ENCODE measurements at regions of chr11 and their contacts with region 1.

Region 1: DNA sequence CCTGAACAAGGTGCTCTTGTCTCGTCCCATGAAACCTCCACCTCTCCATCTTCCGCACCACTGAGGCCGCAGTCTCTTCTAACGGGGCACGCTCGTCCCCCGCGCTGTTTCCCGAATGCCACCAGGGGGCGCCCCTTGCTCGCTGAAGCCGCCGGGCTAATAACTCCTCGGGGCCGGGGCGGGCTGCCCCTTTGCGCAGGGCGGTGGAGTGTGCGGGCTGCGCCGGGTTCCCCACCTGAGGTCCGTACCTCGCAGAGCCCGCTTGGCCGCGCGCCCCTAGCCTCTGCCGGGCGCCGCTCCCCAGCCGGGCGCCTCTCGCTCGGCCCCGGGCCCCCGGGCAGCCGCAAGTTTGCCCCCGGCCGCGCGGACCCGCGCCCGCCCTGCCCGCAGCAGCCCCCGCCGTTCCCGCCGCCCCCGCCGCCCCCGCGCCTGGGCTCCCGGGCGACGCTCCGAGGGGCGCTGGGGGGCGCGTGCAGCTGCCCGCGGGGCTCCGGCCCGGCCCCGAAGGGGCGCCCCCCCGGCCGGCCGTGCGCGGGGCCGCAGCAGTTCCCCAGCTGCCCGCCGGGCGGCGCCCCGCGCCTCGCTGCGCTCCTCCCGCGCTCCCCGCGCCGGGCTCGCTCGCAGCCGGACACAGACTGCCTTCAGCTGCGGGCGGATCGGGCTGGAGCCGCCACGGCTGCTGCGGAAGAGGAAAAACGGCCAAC is at the start of gene GRIK4:
- DNase-seq: peak; percentile 22
- ATAC-seq: peak; percentile 94
- H3K4me3 ChIP-seq: peak within 1 kb of the TSS; percentile 41 to 42
- H3K27ac ChIP-seq: no peak within 1 kb of the TSS
- H3K4me1 ChIP-seq: peaks cover 3% of the 10 kb centered on the region
- H3K27me3 ChIP-seq: peaks cover 3% of the 10 kb centered on the region
- CTCF ChIP-seq: peak; percentile 96
- total RNA-seq, gene GRIK4: 0.62 TPM

Region 2: DNA sequence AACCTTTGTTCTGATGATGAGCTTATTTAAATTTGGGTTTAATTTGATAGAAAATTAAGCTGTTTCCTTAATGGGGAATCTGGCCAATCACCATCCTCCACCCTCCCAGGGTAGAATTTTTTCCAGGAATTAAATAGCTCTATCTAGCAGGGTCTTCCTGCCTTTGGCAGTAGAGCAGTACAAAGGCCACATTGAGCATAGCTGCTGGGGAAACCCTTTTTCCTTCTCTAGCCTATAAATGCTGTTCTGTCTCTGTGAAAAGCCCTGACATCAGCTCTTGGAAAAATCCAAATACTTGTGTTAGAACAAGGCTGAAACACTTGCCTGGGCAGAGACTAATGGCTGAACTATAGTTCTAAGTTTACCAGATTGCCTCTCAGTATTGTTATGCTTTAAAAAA is 120.0 kb before region 1 on chr11:
- CTCF ChIA-PET with region 1: no interaction called
- POLR2A ChIA-PET with region 1: no interaction called
- in situ Hi-C with region 1: no loop called
- intact Hi-C with region 1: no loop called
- DNase-seq: no peak
- ATAC-seq: 0 out of 2 replicates have a peak, but pooled peaks have one; percentile 30
- H3K4me3 ChIP-seq: no peak overlapping the region
- H3K27ac ChIP-seq: peak overlapping the region; percentile 3
- H3K4me1 ChIP-seq: peaks cover 32% of the 10 kb centered on the region
- H3K27me3 ChIP-seq: no peaks in the 10 kb centered on the region
- CTCF ChIP-seq: no peak

Region 3: DNA sequence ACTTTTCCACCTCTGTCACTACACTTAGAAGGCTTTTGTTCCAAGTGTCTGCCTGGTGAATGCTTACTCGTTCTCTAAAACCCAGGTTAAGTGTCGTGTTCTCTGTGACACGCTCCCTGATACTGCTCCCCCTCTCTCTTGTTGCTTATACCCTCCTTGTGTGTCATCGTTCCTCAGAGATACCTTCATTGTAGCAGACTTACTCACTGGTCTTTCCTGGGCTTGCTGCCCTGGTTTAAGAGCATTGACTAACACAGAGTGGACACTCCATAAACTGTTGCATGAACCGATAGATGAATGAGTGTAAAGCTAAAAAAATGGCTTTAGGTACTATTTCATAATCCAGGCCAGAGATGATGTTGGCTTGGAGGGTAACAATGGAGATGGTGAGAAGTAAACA is 171.6 kb after region 1 on chr11:
- CTCF ChIA-PET with region 1: interaction called, 12 read pairs
- POLR2A ChIA-PET with region 1: no interaction called
- in situ Hi-C with region 1: no loop called
- intact Hi-C with region 1: loop called (anchors 1 kb)
- DNase-seq: no peak
- ATAC-seq: no peak
- H3K4me3 ChIP-seq: no peak overlapping the region
- H3K27ac ChIP-seq: no peak overlapping the region
- H3K4me1 ChIP-seq: no peaks in the 10 kb centered on the region
- H3K27me3 ChIP-seq: peaks cover 25% of the 10 kb centered on the region
- CTCF ChIP-seq: no peak

Region 4: GRCh38 chr11:120771551-120772060 is 260.3 kb after region 1 on chr11:
- CTCF ChIA-PET with region 1: no interaction called
- POLR2A ChIA-PET with region 1: no interaction called
- in situ Hi-C with region 1: no loop called
- intact Hi-C with region 1: no loop called
- DNase-seq: no peak
- ATAC-seq: no peak
- H3K4me3 ChIP-seq: no peak overlapping the region
- H3K27ac ChIP-seq: no peak overlapping the region
- H3K4me1 ChIP-seq: no peaks in the 10 kb centered on the region
- H3K27me3 ChIP-seq: no peaks in the 10 kb centered on the region; the same call in 1 of the 2 replicates
- CTCF ChIP-seq: no peak

Region 5: GRCh38 chr11:120952461-120953434 is 441.5 kb after region 1 on chr11:
- CTCF ChIA-PET with region 1: no interaction called
- POLR2A ChIA-PET with region 1: no interaction called
- in situ Hi-C with region 1: no loop called
- intact Hi-C with region 1: loop called (anchors 1 kb)
- DNase-seq: peak; percentile 51
- ATAC-seq: peak; percentile 90
- H3K4me3 ChIP-seq: peak overlapping the region in 1 of 2 experiments; percentile 10; a peak in 1 of 4 replicates
- H3K27ac ChIP-seq: no peak overlapping the region
- H3K4me1 ChIP-seq: no peaks in the 10 kb centered on the region
- H3K27me3 ChIP-seq: peaks cover 28% of the 10 kb centered on the region
- CTCF ChIP-seq: peak; percentile 95

Region 6: DNA sequence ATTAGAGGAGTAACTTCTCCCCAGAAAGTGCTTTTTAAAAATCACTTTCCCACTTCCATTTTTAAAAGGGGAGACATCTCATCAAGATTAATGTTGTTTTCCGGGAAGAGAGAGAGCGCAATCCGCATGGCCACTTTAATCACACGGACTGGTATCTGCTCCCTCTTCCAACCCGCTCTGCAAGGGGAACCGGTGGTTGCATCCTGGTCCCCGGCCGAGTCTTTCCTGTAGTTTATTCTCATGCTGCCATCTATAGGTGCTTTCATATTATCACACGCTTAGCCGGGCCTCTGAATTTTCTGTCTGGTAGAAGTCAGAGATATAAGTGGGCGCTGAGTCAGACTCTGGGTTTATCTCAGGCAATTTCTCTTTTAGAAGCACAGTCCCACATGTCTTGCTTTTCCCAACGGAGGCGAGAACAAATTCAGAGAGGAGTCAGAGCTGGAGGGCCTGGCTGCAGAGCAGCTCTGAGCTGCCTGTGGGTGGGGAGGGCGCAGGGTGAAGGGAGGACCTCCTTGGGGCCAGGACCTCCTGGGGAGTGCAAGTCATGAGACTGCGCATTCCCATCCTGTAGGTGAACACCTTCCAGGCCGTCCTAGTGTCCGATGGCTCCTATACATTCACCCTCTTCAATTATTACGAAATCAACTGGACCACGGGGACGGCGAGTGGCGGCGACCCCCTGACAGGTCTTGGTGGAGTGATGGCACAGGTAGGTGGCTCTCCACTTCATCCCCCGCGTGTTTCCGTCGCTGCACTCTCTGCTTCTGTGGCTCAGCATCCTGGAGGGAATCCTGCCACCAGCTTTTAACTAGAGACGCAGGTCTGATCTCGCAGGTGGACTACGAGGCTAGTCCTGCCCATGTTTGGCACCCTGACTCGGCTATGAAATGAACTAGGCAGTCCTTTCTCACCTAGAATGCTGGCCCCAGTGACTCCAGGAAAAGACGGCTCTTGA is 601.5 kb after region 1 on chr11:
- CTCF ChIA-PET with region 1: no interaction called
- POLR2A ChIA-PET with region 1: no interaction called
- in situ Hi-C with region 1: no loop called
- intact Hi-C with region 1: loop called (anchors 10 kb)
- DNase-seq: no peak
- ATAC-seq: peak; percentile 97
- H3K4me3 ChIP-seq: no peak overlapping the region
- H3K27ac ChIP-seq: no peak overlapping the region
- H3K4me1 ChIP-seq: 0 out of 2 replicates have a peak, but pooled peaks cover 3% of the 10 kb centered on the region
- H3K27me3 ChIP-seq: peaks cover 33% of the 10 kb centered on the region
- CTCF ChIP-seq: peak; percentile 86

Region 7: DNA sequence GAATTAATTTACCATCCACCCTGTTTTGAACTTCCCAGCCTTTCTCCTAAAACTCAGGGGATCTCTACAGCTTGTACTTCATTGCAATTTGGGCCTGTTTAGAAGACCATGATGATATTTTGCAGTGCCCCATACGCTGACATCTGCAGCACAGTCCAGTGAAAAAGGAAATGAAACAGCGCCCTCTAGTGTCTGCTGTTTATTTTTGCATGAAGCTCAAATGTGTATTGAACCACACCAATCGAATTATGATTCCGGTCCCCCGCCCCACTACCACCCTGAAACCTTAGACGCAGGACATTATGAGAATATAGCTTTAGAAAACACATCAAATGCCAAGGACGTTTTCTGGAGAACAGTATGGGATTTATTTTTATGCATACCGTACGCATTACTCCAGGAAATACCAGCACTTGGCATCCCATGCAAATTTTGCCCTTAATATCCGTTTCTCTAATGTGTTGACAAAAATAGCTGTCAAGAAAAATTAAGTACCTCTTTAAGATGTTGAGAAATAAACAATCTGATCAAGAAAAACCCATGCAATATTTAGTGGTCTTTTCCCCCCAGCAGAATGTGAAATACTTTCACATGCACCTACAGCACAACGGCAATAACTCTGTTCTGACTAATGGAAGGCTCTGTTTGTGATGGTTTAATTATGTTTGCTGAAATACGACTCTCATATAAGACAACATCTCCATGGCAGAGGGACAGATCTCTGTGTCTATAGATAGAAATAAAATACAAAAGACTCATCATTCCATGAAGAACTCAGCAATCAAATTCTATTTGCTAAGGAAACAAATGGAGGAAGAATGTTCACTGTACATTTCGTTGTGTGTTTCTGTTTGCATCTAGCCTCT is 683.7 kb after region 1 on chr11:
- CTCF ChIA-PET with region 1: no interaction called
- POLR2A ChIA-PET with region 1: no interaction called
- in situ Hi-C with region 1: no loop called
- intact Hi-C with region 1: loop called (anchors 2 kb)
- DNase-seq: peak; percentile 46
- ATAC-seq: peak; percentile 97
- H3K4me3 ChIP-seq: no peak overlapping the region
- H3K27ac ChIP-seq: no peak overlapping the region
- H3K4me1 ChIP-seq: no peaks in the 10 kb centered on the region
- H3K27me3 ChIP-seq: peaks cover 28% of the 10 kb centered on the region
- CTCF ChIP-seq: peak; percentile 91

Measured in Panc1 (cell line).